ENCODE measurements at regions of chr10 and their contacts with region 1.

Region 1: GRCh38 chr10:11986593-11987216 is 55.9 kb downstream of the UPF2 start:
- DNase-seq: peak; percentile 34
- H3K4me3 ChIP-seq: no peak overlapping the region
- H3K27me3 ChIP-seq: no peaks in the 10 kb centered on the region
- CTCF ChIP-seq: peak; percentile 84

Region 2: DNA sequence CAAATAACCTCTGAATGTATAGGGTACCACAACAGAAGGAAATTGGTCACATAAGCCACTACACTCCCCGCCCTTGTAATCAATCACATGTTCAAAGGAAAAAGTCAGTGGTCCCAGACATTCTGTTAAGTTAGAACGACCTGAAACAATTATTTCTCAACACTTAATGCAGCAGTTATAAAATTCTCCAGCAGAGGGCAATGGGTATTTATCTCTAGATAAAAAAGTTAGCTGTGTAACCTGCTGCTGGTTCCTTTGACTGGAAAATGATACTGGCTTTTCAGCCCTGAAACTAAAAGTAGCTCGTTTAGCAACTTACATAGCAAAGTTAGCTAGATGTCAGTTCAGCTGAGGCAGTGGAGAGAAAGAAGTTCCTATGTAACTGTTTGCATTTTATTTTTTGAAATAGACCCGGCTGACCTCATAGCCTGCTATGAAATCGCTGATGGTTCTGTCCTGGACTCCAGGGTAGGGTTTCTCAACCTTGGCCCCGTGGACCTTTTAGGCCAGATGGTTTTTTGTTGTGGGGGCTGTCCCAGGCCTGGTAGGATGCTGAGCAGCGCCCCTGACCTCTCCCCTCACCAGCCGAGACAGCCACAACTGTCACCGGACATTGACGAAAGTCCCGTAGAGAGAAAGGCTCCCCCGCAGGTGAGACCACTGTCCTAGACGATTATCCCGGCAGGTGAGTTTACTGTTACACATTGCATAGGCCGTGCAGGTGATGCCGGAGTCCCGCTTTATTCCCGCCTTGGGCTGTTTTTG is 203.7 kb before region 1 on chr10:
- CTCF ChIA-PET with region 1: interaction called, 30 read pairs
- POLR2A ChIA-PET with region 1: no interaction called
- DNase-seq: no peak
- H3K4me3 ChIP-seq: no peak overlapping the region
- H3K27me3 ChIP-seq: peaks cover 2% of the 10 kb centered on the region; the same call in 1 of the 2 replicates
- CTCF ChIP-seq: peak; percentile 71

Region 3: DNA sequence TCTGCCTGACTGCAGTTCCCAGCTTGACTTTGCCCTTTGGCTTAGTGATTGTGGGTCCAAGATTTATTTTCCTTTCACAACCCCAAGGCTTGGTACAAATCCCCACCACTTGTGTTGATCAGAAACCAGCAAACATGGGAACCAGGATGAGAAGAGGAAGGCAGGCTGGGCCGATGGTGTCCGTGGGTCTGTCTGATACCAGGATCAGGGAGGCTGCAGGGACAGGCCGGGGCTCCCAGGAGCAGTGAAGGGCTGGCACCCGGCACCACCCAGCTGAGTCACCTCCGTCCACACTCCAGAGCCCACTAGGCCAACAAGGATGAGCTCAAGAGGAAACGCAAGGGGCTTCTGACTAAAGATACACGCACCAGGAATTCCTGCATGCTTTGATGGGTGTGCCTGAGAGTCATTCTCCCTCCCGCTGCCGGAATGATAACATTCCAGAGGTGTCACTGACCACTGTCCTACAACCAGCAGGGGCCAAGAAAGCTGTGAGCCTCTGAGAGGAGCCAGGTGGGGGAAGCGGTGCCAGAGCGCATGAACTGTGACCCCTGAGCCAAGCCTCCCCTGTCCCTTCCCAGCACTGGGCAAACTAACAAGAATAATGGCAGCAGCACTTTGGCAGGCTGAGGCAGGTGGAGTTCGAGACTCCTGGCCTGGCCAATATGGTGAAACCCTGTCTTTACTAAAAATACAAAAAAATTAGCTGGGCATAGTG is 192.8 kb before region 1 on chr10:
- CTCF ChIA-PET with region 1: interaction called, 19 read pairs
- POLR2A ChIA-PET with region 1: no interaction called
- DNase-seq: no peak
- H3K4me3 ChIP-seq: no peak overlapping the region
- H3K27me3 ChIP-seq: peaks cover 3% of the 10 kb centered on the region
- CTCF ChIP-seq: no peak

Region 4: DNA sequence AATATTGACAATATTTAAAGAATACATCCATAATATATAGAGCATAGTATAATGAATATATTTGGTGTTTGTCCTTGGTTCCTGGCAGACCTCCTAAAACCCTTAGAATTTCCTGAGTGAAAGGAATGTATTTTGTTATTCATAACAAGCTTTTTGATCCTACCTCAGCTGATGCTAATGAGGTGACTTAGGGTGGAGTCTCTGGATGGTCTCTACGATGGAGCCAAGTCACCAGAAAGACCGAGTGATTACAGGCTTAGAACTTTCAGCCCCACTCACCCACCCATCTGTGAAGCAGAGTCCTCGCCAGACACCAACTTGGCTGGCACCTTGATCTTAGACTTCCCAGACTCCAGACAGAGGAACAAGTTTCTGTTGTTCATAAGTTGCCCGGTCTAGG is 20.0 kb after region 1 on chr10:
- CTCF ChIA-PET with region 1: interaction called, 14 read pairs
- POLR2A ChIA-PET with region 1: no interaction called
- DNase-seq: no peak
- H3K4me3 ChIP-seq: no peak overlapping the region
- H3K27me3 ChIP-seq: no peaks in the 10 kb centered on the region
- CTCF ChIP-seq: no peak